Cardiac septum (tissue), 1 donor: ENCODE measurements at regions of chr2 and their contacts with region 1.

Region 1: DNA sequence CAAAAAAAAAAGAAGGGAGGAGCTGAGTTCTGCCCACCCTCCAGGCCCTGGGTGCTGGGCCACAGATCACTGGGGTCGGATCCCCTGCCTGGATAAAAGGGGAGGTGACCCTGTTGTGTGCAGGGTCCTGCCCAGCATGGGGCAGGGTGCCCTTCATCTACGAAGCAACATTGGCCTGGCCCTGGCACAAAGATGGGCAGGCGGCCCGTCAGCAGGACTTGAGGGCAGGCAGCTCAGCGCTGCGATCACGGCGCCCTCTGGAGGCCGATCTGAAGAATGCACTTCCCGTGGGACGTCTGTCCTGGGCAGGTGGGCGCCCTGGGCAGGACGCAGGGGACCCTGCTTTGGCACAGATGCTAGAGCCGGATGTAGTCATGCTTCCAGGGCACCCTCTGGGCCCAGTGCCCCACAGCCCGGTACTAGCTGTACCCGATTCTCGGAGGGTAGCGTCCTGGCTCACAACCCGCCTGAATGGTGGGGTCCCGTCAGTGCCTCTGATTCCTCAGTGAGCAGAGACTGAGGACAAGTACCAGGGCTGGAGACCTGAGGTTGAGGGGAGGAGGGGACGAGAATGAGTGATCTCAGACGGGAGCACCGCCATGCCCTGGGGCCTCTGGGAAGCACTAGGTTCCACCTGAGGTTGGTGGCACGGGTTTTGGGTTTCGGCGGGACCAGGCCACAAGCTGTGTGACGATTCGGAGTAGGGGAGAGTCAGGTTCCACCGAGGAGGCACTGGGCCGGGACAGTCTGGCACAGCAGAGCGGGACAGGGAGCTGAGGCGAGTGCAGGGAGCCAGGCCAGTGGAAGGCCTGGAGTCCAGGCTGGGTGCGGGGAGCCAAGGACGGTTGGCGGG is 18.0 kb downstream of the ARID5A start:
- DNase-seq: peak; percentile 90

Region 2: GRCh38 chr2:96407041-96407918 is 147.2 kb before region 1 on chr2:
- intact Hi-C with region 1: loop called (anchors 5 kb)
- DNase-seq: peak; percentile 41

Region 3: DNA sequence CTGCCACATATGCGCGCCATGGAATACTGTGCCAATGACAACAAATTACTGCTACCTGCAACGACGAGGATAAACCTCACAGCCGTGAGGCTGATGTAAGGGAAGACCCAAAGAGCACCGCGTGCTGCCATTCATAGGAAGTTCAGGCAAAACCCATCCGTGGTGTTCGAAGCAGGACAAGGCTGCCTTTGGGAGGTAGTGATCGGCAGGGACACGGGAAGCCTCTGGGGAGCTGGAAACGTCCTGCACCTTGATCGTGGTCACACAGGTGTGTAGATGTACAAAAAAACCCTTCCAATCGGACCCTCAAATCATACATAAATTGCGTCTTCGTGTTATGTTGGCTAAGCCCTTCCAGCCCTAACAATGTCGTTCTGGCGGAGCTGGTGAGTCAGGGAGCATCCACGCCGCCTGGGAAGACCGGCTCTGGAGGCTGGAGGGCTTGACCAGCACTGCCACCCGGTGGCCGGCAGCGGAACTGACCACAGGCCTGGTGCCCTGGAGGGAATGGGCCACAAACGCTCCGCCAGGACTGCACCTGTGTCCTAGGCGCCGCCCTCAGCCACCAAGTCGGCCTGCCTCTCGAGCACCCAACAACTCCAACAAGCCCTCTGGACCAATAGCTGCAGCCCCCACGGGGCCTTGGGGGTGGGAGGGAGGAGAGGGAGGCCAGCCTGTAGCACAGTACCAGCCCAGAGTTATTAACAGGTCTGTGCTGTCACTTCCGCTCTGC is 45.2 kb before region 1 on chr2:
- intact Hi-C with region 1: loop called (anchors 2 kb)
- DNase-seq: peak; percentile 94

Region 4: DNA sequence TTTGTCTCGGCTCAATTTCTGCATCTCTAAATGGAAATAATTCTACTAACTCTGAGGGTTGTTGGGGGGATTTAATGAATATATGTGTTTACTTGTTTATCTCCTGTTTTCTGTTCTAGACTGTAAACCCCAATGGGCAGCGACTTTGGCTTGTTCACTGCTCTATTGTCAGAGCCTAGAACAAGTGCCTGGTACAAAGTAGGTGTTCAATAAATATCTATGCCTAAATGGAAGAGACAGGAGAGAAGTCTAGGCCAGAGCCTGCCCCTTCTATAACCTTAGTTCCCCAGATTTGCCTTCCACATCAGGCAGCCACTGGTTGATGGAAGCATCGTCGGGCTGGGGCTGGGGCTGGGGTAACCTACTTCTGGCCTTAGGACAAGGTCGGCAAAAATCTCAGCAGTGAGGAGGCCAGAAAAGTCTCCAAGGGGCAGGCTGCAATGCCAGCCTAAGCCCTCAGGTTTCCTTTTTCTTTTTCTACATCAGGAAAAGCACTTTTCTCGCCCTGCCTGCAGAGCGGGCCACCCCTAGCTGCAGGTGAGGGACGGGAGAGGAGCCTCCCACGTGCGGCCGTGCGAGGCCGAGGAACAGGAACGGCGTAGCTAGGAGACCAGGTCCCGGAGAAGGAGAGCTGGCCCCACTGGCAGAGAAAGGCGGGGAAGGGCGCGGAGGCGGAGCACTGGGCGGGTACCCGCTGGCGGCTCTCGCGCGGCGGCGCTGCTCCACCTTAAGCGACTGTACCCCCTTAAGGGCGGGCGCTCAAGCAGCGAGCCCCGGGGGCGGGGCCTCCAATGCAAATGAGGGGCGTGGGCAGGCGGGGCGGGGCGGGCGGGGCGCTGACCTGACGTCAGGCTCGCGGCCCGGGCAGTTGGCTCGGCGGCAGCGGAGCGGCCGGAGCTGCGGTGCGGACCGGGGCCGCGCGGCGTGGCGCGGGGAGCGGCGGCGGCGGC is 205.8 kb after region 1 on chr2 and contains the start of gene CNNM4:
- intact Hi-C with region 1: loop called (anchors 5 kb)
- DNase-seq: peak; percentile 97
- total RNA-seq, gene CNNM4: 36.8 TPM

Region 5: GRCh38 chr2:96801005-96801785 is 246.7 kb after region 1 on chr2:
- intact Hi-C with region 1: loop called (anchors 5 kb)
- DNase-seq: peak; percentile 88

Region 6: DNA sequence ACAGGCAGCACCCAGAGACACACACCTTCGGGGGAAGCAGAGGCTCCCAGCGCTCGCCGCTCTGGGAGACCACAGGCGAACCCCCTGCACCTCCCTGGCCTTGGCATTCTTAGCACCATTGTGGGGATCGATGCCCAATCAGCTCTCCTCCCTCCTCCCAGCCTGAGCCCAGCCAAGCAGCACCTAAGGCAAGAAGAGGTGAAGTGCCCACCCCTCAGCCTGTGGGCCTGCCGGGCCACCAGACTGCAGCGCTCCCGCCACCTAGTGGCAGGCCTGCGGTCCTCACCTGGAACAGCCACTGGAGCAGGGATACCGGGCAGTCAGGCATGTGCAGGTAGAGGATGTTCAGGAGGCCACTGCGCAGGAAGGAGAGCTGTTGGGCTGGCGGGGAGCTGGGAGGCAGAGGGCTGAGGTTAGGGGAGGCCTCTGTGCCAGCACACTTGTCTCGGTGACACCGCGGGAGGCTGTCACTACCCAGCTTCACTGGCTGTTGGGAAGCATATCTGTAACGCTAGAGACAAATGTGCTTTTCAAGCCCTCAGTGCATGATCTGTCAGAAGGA is 396.7 kb after region 1 on chr2:
- intact Hi-C with region 1: loop called (anchors 10 kb)
- DNase-seq: peak; percentile 88